A549 (cell line): ENCODE measurements at regions of chr3 and their contacts with region 1.

Region 1: DNA sequence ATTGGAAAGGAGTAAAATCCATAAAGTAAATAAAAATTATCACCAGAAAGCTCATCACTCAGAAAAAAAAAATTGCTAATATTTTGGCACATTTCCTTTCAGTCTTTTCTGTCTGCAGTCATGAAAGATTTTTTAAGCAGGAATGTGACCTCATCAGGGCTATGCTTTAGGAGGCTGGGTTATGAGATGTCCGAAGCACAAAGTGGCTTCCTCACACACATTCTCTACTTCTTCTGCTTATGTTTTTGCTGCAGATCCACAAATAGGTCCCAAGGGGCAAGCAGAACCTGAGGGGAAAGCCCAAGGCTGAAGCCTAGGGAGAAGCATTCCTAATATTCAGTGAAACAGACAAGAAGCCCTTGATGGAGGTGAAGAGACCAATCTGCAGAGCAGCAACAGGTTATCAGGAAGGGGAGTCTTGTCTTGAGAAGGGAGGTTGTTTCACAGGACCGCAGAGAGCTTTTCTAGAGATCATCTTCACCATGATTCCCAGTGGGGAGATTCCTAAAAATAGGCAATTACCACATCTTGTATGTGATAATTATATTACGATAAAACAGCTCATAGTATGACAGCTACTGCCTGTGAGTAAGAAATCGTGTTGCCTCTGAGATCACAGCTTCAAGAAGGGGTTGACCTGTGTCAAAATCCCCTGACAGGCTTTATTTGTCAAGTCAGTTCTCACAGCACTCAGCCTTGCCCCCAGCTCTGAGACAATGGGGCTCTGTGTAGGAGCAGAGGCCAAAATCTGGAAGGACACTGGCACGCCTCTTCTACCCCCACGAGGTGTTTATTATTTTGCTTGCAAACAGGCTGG is 60.5 kb downstream of the IGF2BP2 start:
- DNase-seq: no peak
- ATAC-seq: no peak
- H3K4me3 ChIP-seq: no peak overlapping the region
- H3K27ac ChIP-seq: no peak overlapping the region
- H3K4me1 ChIP-seq: no peaks in the 10 kb centered on the region
- CTCF ChIP-seq: no peak
- EP300 ChIP-seq: no peak
- POLR2A ChIP-seq: no peak
- RAD21 ChIP-seq: no peak

Region 2: DNA sequence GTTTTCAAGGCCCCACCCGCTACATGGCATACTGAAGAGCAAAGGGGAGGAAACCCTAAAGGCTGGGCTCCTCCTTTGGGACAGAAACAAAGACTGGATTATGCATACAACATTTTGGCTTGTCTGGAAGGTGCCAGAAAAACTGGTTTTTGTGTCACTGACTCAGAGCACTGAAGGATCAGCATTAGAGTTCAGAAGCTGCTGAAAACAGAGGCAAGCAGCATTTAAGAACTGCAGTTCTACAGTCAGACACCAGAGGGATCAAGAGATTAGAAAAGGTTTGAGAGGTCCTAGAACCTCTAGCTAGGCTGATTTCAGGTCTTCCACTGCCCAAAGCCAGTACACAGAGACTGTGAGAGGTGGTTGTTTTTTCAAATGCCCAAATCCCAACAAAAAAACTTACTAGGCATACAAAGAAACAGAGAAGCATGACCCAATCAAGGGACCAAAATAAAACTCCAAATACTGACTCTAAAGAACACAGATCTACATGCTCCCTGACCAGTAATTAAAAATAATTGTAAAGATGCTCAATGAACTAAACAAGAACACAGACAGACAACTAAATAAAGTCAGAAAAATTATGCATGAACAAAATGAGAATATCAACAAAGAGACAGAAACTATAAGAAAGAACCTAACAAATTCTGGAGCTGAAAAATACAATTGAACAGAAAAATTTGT is 87.1 kb before region 1 on chr3:
- CTCF ChIA-PET with region 1: interaction called, 15 read pairs
- POLR2A ChIA-PET with region 1: no interaction called
- DNase-seq: peak; percentile 61 to 62
- ATAC-seq: peak; percentile 76 to 86; a peak in 5 of 6 replicates
- H3K4me3 ChIP-seq: no peak overlapping the region
- H3K27ac ChIP-seq: no peak overlapping the region
- H3K4me1 ChIP-seq: no peaks in the 10 kb centered on the region; the same call in 2 of the 3 replicates
- CTCF ChIP-seq: peak; percentile 47
- EP300 ChIP-seq: no peak
- POLR2A ChIP-seq: no peak
- RAD21 ChIP-seq: peak; percentile 62 to 64

Region 3: GRCh38 chr3:185781759-185782158 is 17.4 kb after region 1 on chr3:
- CTCF ChIA-PET with region 1: interaction called, 26 read pairs
- POLR2A ChIA-PET with region 1: no interaction called
- DNase-seq: no peak
- ATAC-seq: no peak
- H3K4me3 ChIP-seq: no peak overlapping the region
- H3K27ac ChIP-seq: no peak overlapping the region
- H3K4me1 ChIP-seq: peaks cover 6% of the 10 kb centered on the region; the same call in 1 of the 3 replicates
- CTCF ChIP-seq: no peak
- EP300 ChIP-seq: no peak
- POLR2A ChIP-seq: no peak
- RAD21 ChIP-seq: no peak